ENCODE measurements at regions of chr18 and their contacts with region 1.

Region 1: DNA sequence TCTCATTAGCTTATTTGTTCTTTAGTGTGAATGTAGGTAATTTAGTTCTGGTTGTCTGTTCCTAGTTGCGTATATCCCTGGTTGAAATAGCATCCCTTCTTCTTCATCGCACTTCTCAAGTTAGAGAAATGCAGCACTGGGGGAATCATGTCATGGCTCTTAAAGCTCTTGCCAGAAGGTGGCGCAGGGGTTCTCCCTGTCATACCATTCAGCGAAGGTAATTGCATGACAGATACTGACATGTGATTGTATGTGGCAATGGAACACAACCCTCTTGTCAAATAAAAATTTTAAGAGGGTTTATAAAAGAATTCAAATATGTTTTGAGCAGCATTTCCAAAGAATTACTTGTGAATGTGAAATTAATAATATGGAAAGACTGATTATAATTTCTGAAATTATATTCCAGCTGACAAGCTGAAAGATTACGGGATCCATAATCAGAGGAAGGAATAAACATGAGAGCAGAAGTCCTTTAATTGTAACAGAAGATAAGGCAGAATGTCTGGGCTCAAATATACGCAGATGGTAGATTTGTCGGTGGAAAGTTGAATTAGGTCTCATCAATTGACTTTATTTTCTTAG is 411.7 kb downstream of the DSEL start:
- DNase-seq: peak; percentile 66
- H3K4me3 ChIP-seq: no peak overlapping the region
- H3K27ac ChIP-seq: no peak overlapping the region
- H3K4me1 ChIP-seq: no peaks in the 10 kb centered on the region
- H3K27me3 ChIP-seq: peaks cover 2 to 3% of the 10 kb centered on the region in 2 experiments
- CTCF ChIP-seq: peak; percentile 74 to 75
- POLR2A ChIP-seq: no peak

Region 2: GRCh38 chr18:67117804-67118203 is 13.0 kb after region 1 on chr18:
- CTCF ChIA-PET with region 1: interaction called, 11 read pairs
- POLR2A ChIA-PET with region 1: no interaction called
- dilution Hi-C with region 1: no loop called
- intact Hi-C with region 1: no loop called
- DNase-seq: no peak
- H3K4me3 ChIP-seq: no peak overlapping the region
- H3K27ac ChIP-seq: no peak overlapping the region
- H3K4me1 ChIP-seq: no peaks in the 10 kb centered on the region
- H3K27me3 ChIP-seq: peaks cover 0 to 1% of the 10 kb centered on the region in 2 experiments
- CTCF ChIP-seq: no peak
- POLR2A ChIP-seq: no peak

Region 3: GRCh38 chr18:67199993-67200617 is 95.3 kb after region 1 on chr18:
- CTCF ChIA-PET with region 1: interaction called, 118 read pairs
- POLR2A ChIA-PET with region 1: no interaction called
- dilution Hi-C with region 1: no loop called
- intact Hi-C with region 1: loop called (anchors 1 kb)
- DNase-seq: peak; percentile 72
- H3K4me3 ChIP-seq: no peak overlapping the region
- H3K27ac ChIP-seq: no peak overlapping the region
- H3K4me1 ChIP-seq: no peaks in the 10 kb centered on the region
- H3K27me3 ChIP-seq: no peaks in the 10 kb centered on the region
- CTCF ChIP-seq: peak; percentile 32 to 34
- POLR2A ChIP-seq: no peak

Region 4: DNA sequence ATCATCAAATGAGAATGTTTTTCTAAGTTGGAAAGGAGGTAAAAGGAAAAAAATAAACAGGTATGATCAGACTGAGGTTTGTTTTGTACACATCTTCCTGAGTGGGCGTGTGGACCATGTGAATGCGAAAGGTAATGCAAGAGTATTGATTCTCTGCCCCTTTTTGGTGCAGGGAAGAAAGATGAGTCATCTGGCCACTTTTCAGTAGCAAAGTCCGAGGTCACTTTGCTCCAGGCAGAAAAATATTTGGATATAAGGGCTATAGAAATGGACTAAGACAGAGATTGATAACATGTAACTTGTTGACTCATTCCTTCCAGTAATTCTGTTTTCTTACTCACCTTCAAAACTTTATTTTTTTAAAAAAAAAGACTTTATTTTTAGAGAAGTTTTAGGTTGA is 281.2 kb after region 1 on chr18:
- CTCF ChIA-PET with region 1: no interaction called
- POLR2A ChIA-PET with region 1: no interaction called
- dilution Hi-C with region 1: no loop called
- intact Hi-C with region 1: no loop called
- DNase-seq: peak; percentile 66
- H3K4me3 ChIP-seq: no peak overlapping the region
- H3K27ac ChIP-seq: peak overlapping the region; percentile 37
- H3K4me1 ChIP-seq: peaks cover 16% of the 10 kb centered on the region
- H3K27me3 ChIP-seq: no peaks in the 10 kb centered on the region
- CTCF ChIP-seq: no peak
- POLR2A ChIP-seq: no peak

Region 5: DNA sequence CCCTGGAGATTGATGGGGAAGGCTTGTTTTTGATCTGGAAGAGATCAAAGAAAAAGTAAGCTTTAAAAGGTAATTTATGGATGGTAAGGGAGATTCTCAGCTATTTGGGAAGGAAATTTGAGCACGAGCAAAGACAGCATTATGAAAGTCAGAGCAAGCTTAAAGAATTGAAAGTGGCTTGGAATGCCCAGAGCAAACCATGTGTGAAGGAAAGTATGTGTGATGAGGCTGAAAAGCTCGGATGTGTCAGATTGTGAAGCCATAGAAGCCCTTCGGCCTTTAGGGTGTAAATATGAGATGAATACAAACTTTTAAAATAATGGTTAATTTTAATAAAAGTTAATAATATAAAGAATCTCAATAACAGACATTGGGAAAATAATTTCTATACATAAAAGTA is 789.1 kb after region 1 on chr18:
- CTCF ChIA-PET with region 1: no interaction called
- POLR2A ChIA-PET with region 1: no interaction called
- dilution Hi-C with region 1: no loop called
- intact Hi-C with region 1: no loop called
- DNase-seq: no peak
- H3K4me3 ChIP-seq: no peak overlapping the region
- H3K27ac ChIP-seq: no peak overlapping the region
- H3K4me1 ChIP-seq: no peaks in the 10 kb centered on the region
- H3K27me3 ChIP-seq: no peaks in the 10 kb centered on the region
- CTCF ChIP-seq: no peak
- POLR2A ChIP-seq: no peak

Region 6: DNA sequence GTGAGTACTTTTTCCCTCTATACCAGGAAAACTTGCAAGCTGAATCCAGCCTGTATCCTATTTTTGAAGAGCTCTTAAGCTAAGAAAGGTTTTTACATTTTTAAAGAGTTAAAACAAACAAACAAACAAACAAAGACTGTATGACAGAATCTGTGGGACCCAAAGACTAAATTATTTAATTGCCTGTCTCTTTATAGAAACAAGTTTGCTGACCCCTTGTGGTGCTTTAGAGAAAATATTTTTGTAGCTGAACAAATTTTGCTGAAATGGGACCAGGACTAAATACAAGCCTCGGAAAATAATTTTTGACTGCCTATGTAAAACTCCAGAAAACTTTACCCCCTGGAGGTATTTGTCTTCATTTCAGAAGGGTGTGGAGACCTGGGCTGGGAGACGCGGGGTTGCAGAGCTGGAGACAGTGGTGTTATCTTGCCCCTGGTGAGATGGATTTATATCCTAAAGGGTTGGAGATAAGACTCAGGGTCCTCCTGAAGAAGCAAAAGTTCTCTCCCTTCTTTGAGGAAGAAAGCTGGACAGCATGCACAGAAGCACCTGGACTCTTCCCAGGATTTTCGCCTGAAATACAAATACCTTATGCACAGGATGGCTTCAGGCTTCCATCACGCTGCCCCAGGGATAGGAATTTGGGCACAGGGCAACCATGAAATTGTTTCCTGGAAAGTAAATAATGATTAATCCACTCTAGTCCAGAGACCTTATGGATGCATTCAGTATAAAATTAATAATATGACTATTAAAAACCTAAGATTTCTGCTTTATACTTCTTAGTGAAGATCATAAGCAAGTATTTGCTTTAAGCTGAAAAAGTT is 1555.8 kb after region 1 on chr18:
- CTCF ChIA-PET with region 1: interaction called, 13 read pairs
- POLR2A ChIA-PET with region 1: no interaction called
- dilution Hi-C with region 1: no loop called
- intact Hi-C with region 1: no loop called
- DNase-seq: peak; percentile 42
- H3K4me3 ChIP-seq: no peak overlapping the region
- H3K27ac ChIP-seq: no peak overlapping the region
- H3K4me1 ChIP-seq: no peaks in the 10 kb centered on the region
- H3K27me3 ChIP-seq: peaks cover 0 to 1% of the 10 kb centered on the region in 2 experiments
- CTCF ChIP-seq: peak; percentile 24 to 32
- POLR2A ChIP-seq: no peak